MCF 10A (cell line): ENCODE measurements at regions of chr10 and their contacts with region 1.

Region 1: GRCh38 chr10:22228943-22229801 is 11.4 kb upstream of the EBLN1 start:
- DNase-seq: peak; percentile 91
- H3K4me3 Mint-ChIP-seq: peak overlapping the region; percentile 87
- H3K27ac Mint-ChIP-seq: peak overlapping the region; percentile 82
- H3K4me1 Mint-ChIP-seq: no peaks in the 10 kb centered on the region
- H3K27me3 Mint-ChIP-seq: no peaks in the 10 kb centered on the region
- CTCF ChIP-seq: no peak

Region 2: DNA sequence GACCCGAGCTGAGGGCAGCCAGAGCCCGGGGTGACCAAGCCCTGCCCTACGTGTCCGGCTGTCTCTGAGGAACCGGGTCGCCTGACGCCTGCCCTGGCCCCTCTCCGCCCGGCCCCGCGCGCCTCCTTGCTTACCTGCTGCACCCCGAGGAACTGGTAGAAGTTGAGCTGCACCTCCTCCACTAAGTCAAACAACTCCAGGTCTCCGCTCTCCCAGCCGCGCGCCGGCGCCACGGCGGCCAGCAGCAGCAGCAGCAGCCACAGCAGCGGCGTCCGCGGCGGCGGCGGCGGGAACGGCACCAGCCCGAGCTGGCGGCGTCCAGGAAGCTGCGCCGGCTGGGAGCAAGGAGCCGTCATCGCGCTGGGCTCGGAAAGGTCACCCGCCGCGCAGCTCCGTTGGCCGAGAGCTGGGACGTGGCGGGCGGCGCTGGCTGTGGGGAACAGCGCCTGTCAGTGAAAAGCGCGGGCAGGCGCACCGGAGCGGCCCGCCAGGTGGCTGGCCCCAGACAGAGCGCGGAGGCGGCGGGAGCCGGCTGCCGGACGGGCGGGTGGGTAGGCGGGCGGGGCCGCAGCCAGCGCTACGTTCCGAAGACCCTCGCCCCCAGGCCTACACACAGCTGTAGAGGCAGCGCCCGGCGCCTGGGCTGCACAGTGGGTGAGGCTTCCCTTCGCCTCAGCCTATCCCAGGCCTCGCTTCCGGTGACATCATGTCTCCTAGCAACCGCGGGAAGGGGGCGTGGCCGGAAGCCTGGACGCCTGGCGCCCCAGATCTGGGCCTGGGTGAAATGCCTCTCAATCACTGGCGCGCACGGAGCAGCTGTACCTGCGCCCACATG is 225.9 kb before region 1 on chr10 and contains the start of gene DNAJC1:
- CTCF ChIA-PET with region 1: interaction called, 5 read pairs
- POLR2A ChIA-PET with region 1: interaction called, 64 read pairs
- intact Hi-C with region 1: loop called (anchors 5 kb)
- DNase-seq: peak; percentile 97
- H3K4me3 Mint-ChIP-seq: peak within 1 kb of the TSS; percentile 79
- H3K27ac Mint-ChIP-seq: peak within 1 kb of the TSS; percentile 79
- H3K4me1 Mint-ChIP-seq: peaks cover 13% of the 10 kb centered on the region
- H3K27me3 Mint-ChIP-seq: no peaks in the 10 kb centered on the region
- CTCF ChIP-seq: no peak
- total RNA-seq, gene DNAJC1: 57.8 and 69.5 TPM in 2 replicates

Region 3: GRCh38 chr10:22086730-22087389 is 142.3 kb before region 1 on chr10:
- CTCF ChIA-PET with region 1: no interaction called
- POLR2A ChIA-PET with region 1: interaction called, 26 read pairs
- intact Hi-C with region 1: no loop called
- DNase-seq: peak; percentile 87
- H3K4me3 Mint-ChIP-seq: peak overlapping the region; percentile 48
- H3K27ac Mint-ChIP-seq: peak overlapping the region; percentile 90
- H3K4me1 Mint-ChIP-seq: peaks cover 26% of the 10 kb centered on the region
- H3K27me3 Mint-ChIP-seq: no peaks in the 10 kb centered on the region
- CTCF ChIP-seq: no peak

Region 4: GRCh38 chr10:22251751-22252223 is 22.6 kb after region 1 on chr10:
- CTCF ChIA-PET with region 1: no interaction called
- POLR2A ChIA-PET with region 1: interaction called, 14 read pairs
- intact Hi-C with region 1: loop called (anchors 1 kb)
- DNase-seq: peak; percentile 55
- H3K4me3 Mint-ChIP-seq: peak overlapping the region; percentile 74
- H3K27ac Mint-ChIP-seq: peak overlapping the region; percentile 95
- H3K4me1 Mint-ChIP-seq: peaks cover 18% of the 10 kb centered on the region
- H3K27me3 Mint-ChIP-seq: no peaks in the 10 kb centered on the region
- CTCF ChIP-seq: no peak

Region 5: GRCh38 chr10:22325272-22326144 is 96.3 kb after region 1 on chr10:
- CTCF ChIA-PET with region 1: no interaction called
- POLR2A ChIA-PET with region 1: interaction called, 239 read pairs
- intact Hi-C with region 1: loop called (anchors 1 kb)
- DNase-seq: peak; percentile 64
- H3K4me3 Mint-ChIP-seq: peak overlapping the region; percentile 80
- H3K27ac Mint-ChIP-seq: peak overlapping the region; percentile 31
- H3K4me1 Mint-ChIP-seq: peaks cover 29% of the 10 kb centered on the region
- H3K27me3 Mint-ChIP-seq: peaks cover 11% of the 10 kb centered on the region
- CTCF ChIP-seq: no peak

Region 6: GRCh38 chr10:22427890-22428571 is 198.9 kb after region 1 on chr10:
- CTCF ChIA-PET with region 1: no interaction called
- POLR2A ChIA-PET with region 1: no interaction called
- intact Hi-C with region 1: loop called (anchors 10 kb)
- DNase-seq: peak; percentile 93
- H3K4me3 Mint-ChIP-seq: peak overlapping the region; percentile 49
- H3K27ac Mint-ChIP-seq: peak overlapping the region; percentile 63
- H3K4me1 Mint-ChIP-seq: peaks cover 41% of the 10 kb centered on the region
- H3K27me3 Mint-ChIP-seq: no peaks in the 10 kb centered on the region
- CTCF ChIP-seq: no peak